Activated B cell treated with CpG ODN at 0.5 μM for 24 hours (primary cell): ENCODE measurements at regions of chr1 and their contacts with region 1.

Region 1: GRCh38 chr1:228165372-228166169 is at the start of gene IBA57:
- DNase-seq: peak; percentile 100
- ATAC-seq: peak; percentile 85
- H3K4me3 Mint-ChIP-seq: peak within 1 kb of the TSS; percentile 90
- H3K27ac Mint-ChIP-seq: peak within 1 kb of the TSS; percentile 94
- H3K4me1 Mint-ChIP-seq: peaks cover 29% of the 10 kb centered on the region
- H3K27me3 Mint-ChIP-seq: no peaks in the 10 kb centered on the region
- CTCF ChIP-seq: no peak
- total RNA-seq, gene IBA57: 10.8 and 14.5 TPM in 2 replicates

Region 2: GRCh38 chr1:227734856-227735538 is 430.6 kb before region 1 on chr1 and contains the starts of genes JMJD4 and SNAP47:
- CTCF ChIA-PET with region 1: no interaction called
- POLR2A ChIA-PET with region 1: interaction called, 4 read pairs
- intact Hi-C with region 1: loop called (anchors 1 kb)
- DNase-seq: peak; percentile 97
- ATAC-seq: peak; percentile 91
- H3K4me3 Mint-ChIP-seq: peak within 1 kb of the TSS; percentile 87
- H3K27ac Mint-ChIP-seq: peak within 1 kb of the TSS; percentile 78
- H3K4me1 Mint-ChIP-seq: peaks cover 42% of the 10 kb centered on the region
- H3K27me3 Mint-ChIP-seq: no peaks in the 10 kb centered on the region
- CTCF ChIP-seq: no peak
- total RNA-seq, gene JMJD4: 23.5 and 26.7 TPM in 2 replicates
- total RNA-seq, gene SNAP47: 24.2 and 24.3 TPM in 2 replicates

Region 3: GRCh38 chr1:227961651-227962225 is 203.8 kb before region 1 on chr1:
- CTCF ChIA-PET with region 1: no interaction called
- POLR2A ChIA-PET with region 1: no interaction called
- intact Hi-C with region 1: no loop called
- DNase-seq: no peak
- ATAC-seq: no peak
- H3K4me3 Mint-ChIP-seq: no peak overlapping the region
- H3K27ac Mint-ChIP-seq: no peak overlapping the region
- H3K4me1 Mint-ChIP-seq: no peaks in the 10 kb centered on the region
- H3K27me3 Mint-ChIP-seq: peaks cover 25% of the 10 kb centered on the region
- CTCF ChIP-seq: no peak

Region 4: DNA sequence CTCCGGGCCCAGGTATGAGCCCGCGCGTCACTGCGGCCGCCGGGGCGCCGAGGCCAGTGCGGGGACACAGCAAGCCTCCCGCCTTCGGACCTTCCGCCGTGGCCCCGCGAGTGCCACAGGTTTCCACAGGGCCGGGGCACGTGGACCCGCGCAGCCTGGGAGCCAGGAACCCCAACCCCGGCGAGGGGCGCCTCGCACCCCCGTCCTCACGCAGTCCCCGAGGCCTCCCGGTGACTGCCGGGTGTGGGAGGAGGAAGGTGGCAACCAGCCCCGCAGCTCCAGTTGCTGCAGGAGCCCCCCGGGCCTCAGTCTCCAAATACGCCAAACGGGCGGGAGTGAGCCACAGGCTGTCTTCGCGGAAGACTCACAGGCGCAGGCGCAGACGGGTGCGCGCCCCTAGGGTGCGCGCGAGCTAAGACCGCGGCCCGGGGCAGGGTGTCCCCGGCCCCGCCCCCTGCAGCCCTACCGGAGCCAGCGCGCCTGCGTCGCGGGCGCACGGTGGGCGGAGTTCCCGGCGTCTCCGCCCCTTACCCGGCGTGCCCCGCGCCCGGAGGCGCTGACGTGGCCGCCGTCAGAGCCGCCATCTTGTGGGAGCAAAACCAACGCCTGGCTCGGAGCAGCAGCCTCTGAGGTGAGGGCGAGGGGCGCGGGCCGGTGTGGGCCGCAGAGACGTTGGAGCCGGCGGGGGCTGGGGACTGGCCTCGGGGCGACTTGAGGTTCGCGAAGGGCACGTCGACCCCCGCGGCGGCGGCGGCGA is 83.3 kb before region 1 on chr1 and contains the start of gene ARF1:
- CTCF ChIA-PET with region 1: no interaction called
- POLR2A ChIA-PET with region 1: interaction called, 26 read pairs
- intact Hi-C with region 1: loop called (anchors 1 kb)
- DNase-seq: peak; percentile 97
- ATAC-seq: peak; percentile 90
- H3K4me3 Mint-ChIP-seq: peak within 1 kb of the TSS; percentile 93
- H3K27ac Mint-ChIP-seq: peak within 1 kb of the TSS; percentile 88
- H3K4me1 Mint-ChIP-seq: peaks cover 45% of the 10 kb centered on the region
- H3K27me3 Mint-ChIP-seq: no peaks in the 10 kb centered on the region
- CTCF ChIP-seq: no peak
- total RNA-seq, gene ARF1: 209 and 213 TPM in 2 replicates

Region 5: GRCh38 chr1:228131766-228132165 is 33.8 kb before region 1 on chr1:
- CTCF ChIA-PET with region 1: interaction called, 27 read pairs
- POLR2A ChIA-PET with region 1: interaction called, 134 read pairs
- intact Hi-C with region 1: loop called (anchors 1 kb)
- DNase-seq: no peak
- ATAC-seq: no peak
- H3K4me3 Mint-ChIP-seq: no peak overlapping the region
- H3K27ac Mint-ChIP-seq: no peak overlapping the region
- H3K4me1 Mint-ChIP-seq: peaks cover 9% of the 10 kb centered on the region
- H3K27me3 Mint-ChIP-seq: peaks cover 2% of the 10 kb centered on the region
- CTCF ChIP-seq: no peak

Region 6: GRCh38 chr1:228219962-228220780 is 54.6 kb after region 1 on chr1:
- CTCF ChIA-PET with region 1: no interaction called
- POLR2A ChIA-PET with region 1: no interaction called
- intact Hi-C with region 1: no loop called
- DNase-seq: no peak
- ATAC-seq: no peak
- H3K4me3 Mint-ChIP-seq: no peak overlapping the region
- H3K27ac Mint-ChIP-seq: no peak overlapping the region
- H3K4me1 Mint-ChIP-seq: no peaks in the 10 kb centered on the region
- H3K27me3 Mint-ChIP-seq: no peaks in the 10 kb centered on the region
- CTCF ChIP-seq: no peak

Region 7: DNA sequence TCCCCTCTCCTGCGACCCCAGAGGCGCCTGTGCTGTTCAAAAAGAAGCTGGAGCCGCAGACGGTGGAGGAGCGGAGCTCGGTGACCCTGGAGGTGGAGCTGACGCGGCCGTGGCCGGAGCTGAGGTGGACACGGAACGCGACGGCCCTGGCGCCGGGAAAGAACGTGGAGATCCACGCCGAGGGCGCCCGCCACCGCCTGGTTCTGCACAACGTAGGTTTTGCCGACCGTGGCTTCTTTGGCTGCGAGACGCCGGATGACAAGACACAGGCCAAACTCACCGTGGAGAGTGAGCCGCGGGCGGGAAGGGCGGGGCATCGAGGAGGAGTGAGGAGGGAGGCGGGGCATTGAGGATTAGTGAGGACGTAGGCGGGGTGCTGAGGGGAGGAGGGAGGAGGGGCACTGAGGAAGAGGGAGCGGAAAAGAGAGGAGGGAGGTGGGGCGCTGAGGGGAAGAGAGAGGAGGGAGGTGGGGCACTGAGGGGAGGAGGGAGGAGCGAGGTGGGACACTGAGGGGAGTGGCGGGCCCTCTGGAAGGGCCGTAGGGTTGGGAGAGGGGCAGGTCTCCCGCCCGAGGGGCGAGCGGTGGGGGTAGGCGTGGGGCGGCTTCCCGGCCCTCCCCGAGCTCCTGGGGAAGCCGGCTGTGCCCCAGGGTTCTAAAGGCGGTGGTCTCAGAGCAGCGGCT is 110.3 kb after region 1 on chr1:
- CTCF ChIA-PET with region 1: no interaction called
- POLR2A ChIA-PET with region 1: interaction called, 11 read pairs
- intact Hi-C with region 1: loop called (anchors 1 kb)
- DNase-seq: peak; percentile 66
- ATAC-seq: peak; percentile 98
- H3K4me3 Mint-ChIP-seq: peak overlapping the region; percentile 82
- H3K27ac Mint-ChIP-seq: no peak overlapping the region
- H3K4me1 Mint-ChIP-seq: peaks cover 8% of the 10 kb centered on the region
- H3K27me3 Mint-ChIP-seq: no peaks in the 10 kb centered on the region
- CTCF ChIP-seq: no peak